AG04449 (cell line): ENCODE measurements at regions of chr6 and their contacts with region 1.

Region 1: GRCh38 chr6:82040405-82041221 is 206.9 kb downstream of the IBTK start:
- DNase-seq: no peak
- H3K4me3 ChIP-seq: no peak overlapping the region
- CTCF ChIP-seq: peak; percentile 76

Region 2: DNA sequence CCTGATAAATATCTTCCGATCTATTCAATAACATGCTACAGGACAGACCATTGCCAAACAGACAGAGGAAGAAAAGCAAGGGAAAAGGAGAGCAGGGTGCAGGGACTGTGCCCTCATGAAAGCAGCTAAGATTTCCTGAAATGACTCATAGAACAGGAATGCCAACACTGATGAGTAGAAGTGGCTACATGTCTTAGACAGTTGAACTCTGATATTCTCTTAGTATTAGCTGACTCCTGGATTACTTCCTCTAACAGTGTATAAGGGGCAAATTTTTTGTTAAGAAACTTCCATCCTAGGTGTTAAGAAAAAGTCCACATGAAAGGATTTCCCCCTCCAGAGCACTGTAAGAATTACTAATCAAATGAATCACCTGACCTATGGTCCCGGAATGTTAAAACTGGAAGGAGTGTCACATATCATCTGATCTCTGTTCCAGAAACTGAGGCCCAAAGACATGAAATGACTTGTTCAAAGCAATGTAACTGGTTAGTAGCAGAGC is 18.0 kb before region 1 on chr6:
- CTCF ChIA-PET with region 1: interaction called, 13 read pairs
- POLR2A ChIA-PET with region 1: no interaction called
- DNase-seq: no peak
- H3K4me3 ChIP-seq: no peak overlapping the region
- CTCF ChIP-seq: no peak

Region 3: GRCh38 chr6:82057846-82058554 is 17.4 kb after region 1 on chr6:
- CTCF ChIA-PET with region 1: interaction called, 12 read pairs
- POLR2A ChIA-PET with region 1: no interaction called
- DNase-seq: no peak
- H3K4me3 ChIP-seq: no peak overlapping the region
- CTCF ChIP-seq: no peak

Region 4: GRCh38 chr6:82178077-82178758 is 137.6 kb after region 1 on chr6:
- CTCF ChIA-PET with region 1: interaction called, 23 read pairs
- POLR2A ChIA-PET with region 1: no interaction called
- DNase-seq: peak; percentile 23
- H3K4me3 ChIP-seq: no peak overlapping the region
- CTCF ChIP-seq: peak; percentile 33